Lower lobe of right lung (tissue), 2 donors: ENCODE measurements at regions of chr1 and their contacts with region 1.

Region 1: GRCh38 chr1:218351391-218352074 is 6.4 kb downstream of the TGFB2 start:
- DNase-seq: no peak
- ATAC-seq: peak; percentile 52 to 68
- H3K4me3 ChIP-seq: peak overlapping the region; percentile 38
- H3K27ac ChIP-seq: peak overlapping the region; percentile 81
- H3K4me1 ChIP-seq: peaks cover 22% of the 10 kb centered on the region
- H3K27me3 ChIP-seq: no peaks in the 10 kb centered on the region
- CTCF ChIP-seq: peak; percentile 48

Region 2: DNA sequence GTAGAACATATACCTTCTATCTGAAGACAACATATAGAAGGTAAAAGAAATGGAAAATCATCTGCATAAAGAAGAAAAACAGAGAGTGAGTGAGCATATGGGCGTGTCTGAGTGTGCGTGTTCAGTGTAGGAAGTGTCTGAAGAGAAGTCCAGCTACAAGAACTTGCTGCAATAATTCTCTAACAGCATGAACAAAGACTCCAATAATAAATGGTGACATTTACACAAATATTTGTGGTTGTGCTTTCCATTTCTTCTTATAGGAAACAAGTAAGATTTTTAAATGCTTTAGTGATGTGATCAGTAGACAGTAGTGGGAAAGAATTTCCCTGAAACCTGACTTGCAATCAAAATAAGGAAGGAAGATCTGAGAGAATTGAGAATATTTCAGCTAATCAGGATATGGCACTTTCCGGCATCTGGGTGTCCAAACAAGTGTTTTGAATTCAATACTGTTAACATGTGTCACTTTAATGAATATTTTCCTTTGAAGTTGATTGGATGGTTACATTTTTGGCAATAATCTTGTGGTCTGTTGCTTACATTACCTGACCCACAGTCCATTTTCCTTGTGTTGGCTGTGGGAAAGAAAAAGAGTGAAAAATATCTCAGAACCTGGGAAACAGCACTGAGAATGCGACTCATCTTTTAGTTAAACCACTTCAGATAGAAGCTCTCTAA is 147.6 kb after region 1 on chr1:
- intact Hi-C with region 1: loop called (anchors 5 kb)
- DNase-seq: no peak
- ATAC-seq: peak; percentile 73 to 75
- H3K4me3 ChIP-seq: peak overlapping the region; percentile 36
- H3K27ac ChIP-seq: peak overlapping the region; percentile 69
- H3K4me1 ChIP-seq: peaks cover 27% of the 10 kb centered on the region
- H3K27me3 ChIP-seq: no peaks in the 10 kb centered on the region
- CTCF ChIP-seq: no peak